Cardiac septum (tissue), 1 donor: ENCODE measurements at regions of chr16 and their contacts with region 1.

Region 1: DNA sequence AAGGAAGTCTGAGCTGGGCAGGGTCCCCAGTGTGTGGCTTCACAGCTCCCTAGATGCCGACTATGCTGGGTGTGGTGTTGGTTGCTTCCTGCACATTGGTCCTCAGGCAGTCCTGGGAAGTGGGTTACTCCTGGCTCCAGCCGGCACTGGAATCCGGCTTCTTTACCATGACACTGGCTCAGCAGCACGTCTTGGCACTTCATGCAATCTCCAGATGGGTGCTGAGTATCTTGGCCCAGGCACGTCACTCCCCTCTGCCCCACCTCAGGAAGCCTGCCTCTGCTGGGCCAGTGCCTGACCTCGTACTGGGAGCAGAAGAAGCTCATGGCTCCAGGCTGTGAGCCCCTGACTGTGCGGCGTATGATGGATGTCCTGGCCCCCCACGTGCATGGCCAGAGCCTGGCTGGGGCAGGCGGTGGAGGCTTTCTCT is 24.5 kb downstream of the FCSK start:
- DNase-seq: no peak

Region 2: DNA sequence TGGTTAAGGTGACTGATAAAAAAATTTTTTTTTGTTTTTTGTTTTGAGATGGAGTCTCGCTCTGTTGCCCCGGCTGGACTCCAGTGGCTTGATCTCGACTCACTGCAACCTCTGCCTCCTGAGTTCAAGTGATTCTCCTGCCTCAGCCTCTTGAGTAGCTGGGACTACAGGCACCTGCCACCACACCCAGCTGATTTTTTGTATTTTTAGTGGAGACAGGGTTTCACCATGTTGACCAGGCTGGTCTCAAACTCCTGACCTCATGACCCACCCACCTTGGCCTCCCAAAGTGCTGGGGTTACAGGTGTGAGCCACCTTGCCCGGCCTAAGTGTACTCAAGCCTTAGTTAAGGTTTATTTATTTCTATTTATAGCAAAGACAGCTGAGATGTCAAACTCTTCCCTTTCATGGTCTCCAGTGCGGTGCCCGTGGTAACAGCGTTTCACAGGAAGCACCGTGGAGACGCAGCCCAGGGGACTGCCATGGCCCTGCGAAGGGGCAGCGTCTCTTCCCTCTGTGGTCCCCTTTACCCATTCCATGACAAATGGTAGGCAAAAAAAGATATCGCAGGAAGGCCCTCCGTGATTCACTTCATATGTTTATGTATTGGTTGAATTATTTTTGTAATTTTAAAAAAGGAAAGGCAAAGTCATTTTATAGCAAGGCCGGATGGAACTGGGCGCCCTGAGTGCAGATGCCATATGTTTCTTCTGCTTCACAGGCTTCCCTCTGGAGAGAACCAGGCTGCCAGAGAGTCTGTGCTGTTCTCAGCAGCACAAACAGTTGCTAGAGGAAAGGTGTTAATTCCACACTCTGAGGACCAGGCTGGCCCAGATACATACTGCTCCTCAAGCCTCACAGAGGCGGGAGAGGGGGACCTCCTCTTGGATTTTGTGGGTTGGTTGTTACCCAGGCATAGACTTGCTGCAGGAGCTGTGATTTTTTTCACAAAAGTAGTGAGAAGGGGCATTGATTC is 103.0 kb before region 1 on chr16:
- intact Hi-C with region 1: loop called (anchors 5 kb)
- DNase-seq: no peak